Spleen (tissue), 13 donors: ENCODE measurements at regions of chr9 and their contacts with region 1.

Region 1: GRCh38 chr9:91775011-91775707 is 174.9 kb downstream of the ROR2 start:
- DNase-seq: peak; percentile 83
- H3K4me3 ChIP-seq: no peak overlapping the region
- H3K27ac ChIP-seq: no peak overlapping the region
- H3K4me1 ChIP-seq: peaks cover 0 to 17% (median 5%) of the 10 kb centered on the region in 6 donors
- H3K27me3 ChIP-seq: peaks cover 0 to 35% (median 3%) of the 10 kb centered on the region in 7 donors
- CTCF ChIP-seq: peak; percentile 23 to 79 (median 65)
- POLR2A ChIP-seq: no peak

Region 2: GRCh38 chr9:91273853-91274552 is 501.2 kb before region 1 on chr9:
- intact Hi-C with region 1: no loop called
- DNase-seq: no peak
- H3K4me3 ChIP-seq: no peak overlapping the region
- H3K27ac ChIP-seq: no peak overlapping the region
- H3K4me1 ChIP-seq: peaks cover 0 to 4% (median 0%) of the 10 kb centered on the region in 6 donors
- H3K27me3 ChIP-seq: no peaks in the 10 kb centered on the region
- CTCF ChIP-seq: no peak
- POLR2A ChIP-seq: no peak

Region 3: GRCh38 chr9:91949946-91950664 is 174.9 kb after region 1 on chr9 and contains the start of gene ROR2:
- intact Hi-C with region 1: loop called (anchors 10 kb)
- DNase-seq: peak; percentile 78
- H3K4me3 ChIP-seq: peak within 1 kb of the TSS; percentile 29 to 67 (median 38)
- H3K27ac ChIP-seq: peak within 1 kb of the TSS; percentile 27 to 76 (median 67)
- H3K4me1 ChIP-seq: peaks cover 7 to 31% (median 25%) of the 10 kb centered on the region in 6 donors
- H3K27me3 ChIP-seq: peaks cover 5 to 100% (median 52%) of the 10 kb centered on the region in 7 donors
- CTCF ChIP-seq: peak in 7 of 11 experiments; percentile 8 to 65 (median 56)
- POLR2A ChIP-seq: no peak
- total RNA-seq, gene ROR2: 2.5 to 15.6 (median 7.2) TPM